GM10248 (cell line): ENCODE measurements at regions of chr10 and their contacts with region 1.

Region 1: DNA sequence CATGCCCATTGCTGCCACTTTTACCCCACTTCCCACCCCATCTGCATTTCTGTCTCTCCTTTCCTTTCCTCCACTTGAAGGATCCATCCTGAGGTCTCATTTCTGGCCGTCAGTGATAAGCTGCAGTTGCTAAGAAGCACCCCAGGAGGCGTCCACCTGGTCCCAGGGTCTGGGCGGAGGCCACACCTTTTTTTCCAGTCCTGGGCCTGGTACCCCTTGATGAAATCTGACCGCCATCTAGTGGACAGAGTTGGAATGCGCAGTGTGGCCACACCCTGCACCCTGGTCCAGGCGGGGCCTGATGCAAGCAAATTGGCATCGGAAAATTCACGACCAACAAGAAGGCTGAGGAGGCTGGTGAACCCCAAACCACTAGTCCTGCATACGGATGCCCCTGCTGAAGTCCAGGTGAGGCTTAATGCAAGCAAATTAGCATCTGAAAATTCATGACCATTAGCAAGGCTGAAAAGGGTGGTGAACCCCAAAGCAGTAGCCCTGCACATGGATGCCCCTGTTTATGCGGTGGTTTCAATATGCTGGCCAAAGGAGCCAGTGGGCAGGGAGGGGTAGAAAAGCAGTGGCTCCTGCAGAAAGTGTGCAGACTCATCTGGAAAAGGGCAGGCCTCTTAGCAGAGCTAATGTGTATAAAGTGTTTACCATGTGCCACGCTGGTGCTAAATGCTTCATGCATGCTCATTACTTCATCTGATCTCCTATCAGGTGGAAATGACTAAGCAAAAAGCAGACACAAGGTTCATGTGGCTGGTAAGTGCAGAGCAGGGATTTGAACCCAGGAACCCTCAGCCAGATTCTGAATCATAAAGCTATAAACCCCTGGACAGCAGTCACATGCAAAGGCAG is 43.2 kb downstream of the GPAM start:
- DNase-seq: peak; percentile 80
- CTCF ChIP-seq: peak; percentile 96

Region 2: GRCh38 chr10:110671788-110672579 is 1468.4 kb before region 1 on chr10:
- CTCF ChIA-PET with region 1: interaction called, 10 read pairs
- POLR2A ChIA-PET with region 1: no interaction called
- DNase-seq: peak; percentile 89
- CTCF ChIP-seq: peak; percentile 90

Region 3: DNA sequence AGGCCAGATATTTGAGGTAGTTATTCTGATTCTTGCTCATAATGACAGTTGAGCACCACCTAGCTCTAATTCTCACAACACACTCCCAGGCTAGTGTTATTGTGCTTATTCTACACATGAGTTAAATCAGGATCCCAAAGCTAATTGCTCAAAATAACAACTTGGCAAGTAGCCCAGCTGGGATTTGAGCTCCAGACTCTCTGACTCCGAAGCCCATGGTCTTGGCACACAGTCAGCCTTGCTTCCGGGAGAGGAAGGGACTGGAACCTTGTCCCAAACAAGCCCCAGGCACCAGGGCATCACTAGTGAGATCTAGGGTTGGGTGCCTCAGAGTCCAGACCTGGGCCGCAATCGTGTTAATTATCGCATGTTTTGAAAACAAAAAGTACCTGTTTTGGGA is 58.2 kb before region 1 on chr10:
- CTCF ChIA-PET with region 1: no interaction called
- POLR2A ChIA-PET with region 1: no interaction called
- DNase-seq: no peak
- CTCF ChIP-seq: no peak

Region 4: GRCh38 chr10:112092502-112092901 is 47.8 kb before region 1 on chr10:
- CTCF ChIA-PET with region 1: interaction called, 14 read pairs
- POLR2A ChIA-PET with region 1: no interaction called
- DNase-seq: no peak
- CTCF ChIP-seq: no peak

Region 5: DNA sequence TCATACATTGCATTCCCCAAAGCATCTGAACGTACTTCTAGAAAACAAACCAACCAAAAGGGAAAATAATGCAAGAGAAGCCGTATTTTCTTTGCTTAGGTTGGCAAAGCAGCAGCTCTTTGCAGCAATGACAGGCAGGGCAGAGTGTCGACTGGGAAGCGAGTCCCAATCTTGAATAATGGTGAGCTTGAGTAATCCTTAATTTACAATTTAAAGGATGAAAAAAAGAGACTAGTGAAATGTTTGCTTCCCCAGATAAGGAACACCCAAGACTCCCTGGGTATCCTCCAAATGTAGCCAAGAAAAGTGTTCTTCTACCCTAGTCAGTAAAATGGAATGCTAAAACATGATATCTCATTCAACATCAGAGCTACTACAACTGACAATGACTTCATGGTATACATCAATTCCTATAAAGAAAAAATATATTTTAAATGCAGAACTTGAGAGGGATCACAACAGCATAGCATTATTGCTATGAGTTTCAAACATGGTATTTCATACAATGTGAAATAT is 11.2 kb after region 1 on chr10:
- CTCF ChIA-PET with region 1: interaction called, 191 read pairs
- POLR2A ChIA-PET with region 1: no interaction called
- DNase-seq: no peak
- CTCF ChIP-seq: no peak

Region 6: DNA sequence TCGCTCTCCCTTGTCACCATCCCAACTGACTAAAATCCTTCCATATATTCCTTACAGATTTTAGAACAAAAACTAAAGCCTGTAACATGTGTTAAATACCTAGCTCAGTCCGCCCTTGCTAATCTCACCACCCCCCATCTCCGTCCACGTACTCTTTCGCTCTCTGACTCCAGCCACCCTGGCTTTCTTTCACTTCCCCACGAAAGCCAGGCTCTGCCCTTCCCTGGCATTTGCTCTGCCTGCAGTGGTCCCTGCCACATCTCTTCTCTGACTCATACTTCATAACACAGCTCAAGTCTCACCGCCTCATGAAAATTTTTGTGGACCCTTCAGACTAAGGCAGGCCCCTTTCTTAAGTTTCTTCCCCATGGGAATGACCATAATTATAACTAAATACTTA is 54.9 kb after region 1 on chr10:
- CTCF ChIA-PET with region 1: interaction called, 11 read pairs
- POLR2A ChIA-PET with region 1: no interaction called
- DNase-seq: no peak
- CTCF ChIP-seq: no peak

Region 7: GRCh38 chr10:112434988-112435619 is 294.8 kb after region 1 on chr10:
- CTCF ChIA-PET with region 1: interaction called, 14 read pairs
- POLR2A ChIA-PET with region 1: no interaction called
- DNase-seq: no peak
- CTCF ChIP-seq: peak; percentile 39